Caco-2 (cell line): ENCODE measurements at regions of chr1 and their contacts with region 1.

Region 1: GRCh38 chr1:97467445-97467844 is 453.4 kb downstream of the DPYD start:
- DNase-seq: peak in 1 of 2 experiments; percentile 4
- H3K4me3 ChIP-seq: no peak overlapping the region
- H3K4me3 Mint-ChIP-seq: peak overlapping the region; percentile 62
- H3K27ac Mint-ChIP-seq: peak overlapping the region; percentile 82
- H3K4me1 ChIP-seq: peaks cover 21% of the 10 kb centered on the region
- H3K4me1 Mint-ChIP-seq: peaks cover 5% of the 10 kb centered on the region
- H3K27me3 ChIP-seq: no peaks in the 10 kb centered on the region
- H3K27me3 Mint-ChIP-seq: no peaks in the 10 kb centered on the region
- CTCF ChIP-seq: no peak

Region 2: DNA sequence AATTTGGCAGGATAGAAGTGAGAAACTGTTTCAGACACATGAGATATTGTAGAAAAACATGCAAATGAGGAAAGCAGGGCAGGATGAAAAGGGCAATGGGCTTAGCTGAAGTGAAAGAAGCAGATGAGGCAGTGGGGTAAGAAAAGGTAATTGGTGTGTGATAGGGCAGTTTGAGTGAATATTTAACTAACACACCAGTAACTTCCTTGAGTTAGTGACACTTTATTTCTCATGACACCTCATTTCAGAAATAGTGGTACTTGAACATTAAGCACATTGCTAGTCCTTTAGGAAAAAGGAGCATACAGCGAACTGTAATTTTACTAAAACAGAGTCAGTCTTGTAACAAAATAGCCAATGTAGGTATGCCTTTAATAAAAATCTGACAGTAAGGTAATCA is 38.4 kb after region 1 on chr1:
- CTCF ChIA-PET with region 1: no interaction called
- POLR2A ChIA-PET with region 1: no interaction called
- intact Hi-C with region 1: loop called (anchors 2 kb)
- DNase-seq: no peak
- H3K4me3 ChIP-seq: no peak overlapping the region
- H3K4me3 Mint-ChIP-seq: no peak overlapping the region
- H3K27ac Mint-ChIP-seq: no peak overlapping the region
- H3K4me1 ChIP-seq: 0 out of 2 replicates have a peak, but pooled peaks cover 5% of the 10 kb centered on the region
- H3K4me1 Mint-ChIP-seq: peaks cover 12% of the 10 kb centered on the region
- H3K27me3 ChIP-seq: no peaks in the 10 kb centered on the region
- H3K27me3 Mint-ChIP-seq: no peaks in the 10 kb centered on the region
- CTCF ChIP-seq: no peak